Caco-2 (cell line): ENCODE measurements at regions of chr9 and their contacts with region 1.

Region 1: GRCh38 chr9:85118990-85119755 is 449.6 kb downstream of the NTRK2 start:
- DNase-seq: no peak
- H3K4me3 ChIP-seq: no peak overlapping the region
- H3K4me3 Mint-ChIP-seq: no peak overlapping the region
- H3K27ac Mint-ChIP-seq: peak overlapping the region; percentile 78
- H3K4me1 ChIP-seq: peaks cover 10% of the 10 kb centered on the region; the same call in 1 of the 2 replicates
- H3K4me1 Mint-ChIP-seq: peaks cover 15% of the 10 kb centered on the region
- H3K27me3 ChIP-seq: no peaks in the 10 kb centered on the region
- H3K27me3 Mint-ChIP-seq: no peaks in the 10 kb centered on the region
- CTCF ChIP-seq: no peak

Region 2: DNA sequence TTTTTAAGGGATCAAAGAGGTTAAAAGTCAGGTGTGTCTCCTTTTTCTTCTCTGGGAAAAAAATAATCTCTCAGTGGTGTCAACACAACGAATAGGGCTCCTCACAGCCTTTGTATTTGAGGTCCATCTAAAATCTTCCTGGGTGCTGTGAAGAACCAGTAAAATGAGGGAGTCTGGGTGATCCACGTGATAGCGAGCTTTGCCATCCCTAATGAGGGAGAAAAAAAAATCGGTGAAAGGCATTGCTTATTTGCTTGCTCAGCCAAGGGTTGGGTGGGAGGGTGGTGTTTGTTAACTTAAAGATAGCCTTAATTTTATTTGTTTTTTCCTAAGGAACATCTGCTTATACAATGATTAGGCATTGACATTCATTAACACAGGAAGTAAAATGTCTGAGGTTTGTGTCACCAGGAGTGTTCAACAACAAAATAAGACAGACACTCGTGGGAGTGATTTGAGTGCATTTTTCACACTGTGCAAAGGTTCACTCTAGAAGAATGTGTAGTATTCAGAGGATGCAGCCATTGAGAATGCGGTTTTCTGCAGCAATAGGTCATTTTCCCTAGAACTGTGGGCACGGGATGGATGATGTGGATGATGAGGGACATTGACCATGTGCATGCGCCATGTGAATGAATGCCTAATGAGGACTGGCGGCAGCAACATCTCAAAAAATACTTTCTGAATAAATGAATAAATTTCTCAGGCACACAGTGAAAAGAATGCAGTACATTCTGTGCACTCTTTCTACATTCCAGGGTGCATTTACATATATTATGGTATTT is 80.2 kb before region 1 on chr9:
- CTCF ChIA-PET with region 1: no interaction called
- POLR2A ChIA-PET with region 1: no interaction called
- intact Hi-C with region 1: no loop called
- DNase-seq: no peak
- H3K4me3 ChIP-seq: no peak overlapping the region
- H3K4me3 Mint-ChIP-seq: no peak overlapping the region
- H3K27ac Mint-ChIP-seq: no peak overlapping the region
- H3K4me1 ChIP-seq: no peaks in the 10 kb centered on the region
- H3K4me1 Mint-ChIP-seq: no peaks in the 10 kb centered on the region
- H3K27me3 ChIP-seq: no peaks in the 10 kb centered on the region
- H3K27me3 Mint-ChIP-seq: no peaks in the 10 kb centered on the region
- CTCF ChIP-seq: no peak

Region 3: DNA sequence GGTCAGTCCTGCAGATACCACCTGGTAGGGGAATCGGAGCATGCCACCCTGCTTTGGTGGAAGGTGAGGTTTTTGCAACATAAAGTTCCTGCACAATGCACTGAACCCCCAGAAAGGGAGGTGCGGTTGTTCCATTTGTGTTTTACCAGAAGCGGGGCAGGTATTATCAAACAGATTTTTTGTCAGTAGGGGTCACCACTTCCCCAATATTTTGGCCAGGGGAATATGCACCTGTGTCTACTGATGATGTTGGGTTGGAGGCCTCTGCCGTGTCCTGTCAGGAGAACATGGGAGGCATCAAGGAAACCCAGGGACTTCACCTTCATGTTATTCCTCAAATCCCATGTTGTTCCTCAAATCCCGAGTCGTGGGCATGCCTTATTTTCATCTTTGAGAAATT is 10.9 kb before region 1 on chr9:
- CTCF ChIA-PET with region 1: no interaction called
- POLR2A ChIA-PET with region 1: no interaction called
- intact Hi-C with region 1: no loop called
- DNase-seq: no peak
- H3K4me3 ChIP-seq: no peak overlapping the region
- H3K4me3 Mint-ChIP-seq: no peak overlapping the region
- H3K27ac Mint-ChIP-seq: no peak overlapping the region
- H3K4me1 ChIP-seq: peaks cover 1% of the 10 kb centered on the region
- H3K4me1 Mint-ChIP-seq: peaks cover 12% of the 10 kb centered on the region
- H3K27me3 ChIP-seq: no peaks in the 10 kb centered on the region
- H3K27me3 Mint-ChIP-seq: no peaks in the 10 kb centered on the region
- CTCF ChIP-seq: no peak

Region 4: GRCh38 chr9:85168412-85168811 is 49.2 kb after region 1 on chr9:
- CTCF ChIA-PET with region 1: no interaction called
- POLR2A ChIA-PET with region 1: no interaction called
- intact Hi-C with region 1: loop called (anchors 2 kb)
- DNase-seq: no peak
- H3K4me3 ChIP-seq: no peak overlapping the region
- H3K4me3 Mint-ChIP-seq: no peak overlapping the region
- H3K27ac Mint-ChIP-seq: no peak overlapping the region
- H3K4me1 ChIP-seq: no peaks in the 10 kb centered on the region
- H3K4me1 Mint-ChIP-seq: peaks cover 7% of the 10 kb centered on the region
- H3K27me3 ChIP-seq: no peaks in the 10 kb centered on the region
- H3K27me3 Mint-ChIP-seq: no peaks in the 10 kb centered on the region
- CTCF ChIP-seq: no peak